T-cell (primary cell): ENCODE measurements at regions of chr12 and their contacts with region 1.

Region 1: GRCh38 chr12:56476972-56477432 is 8.6 kb downstream of the SPRYD4 start:
- DNase-seq: no peak
- ATAC-seq: no peak
- H3K4me3 ChIP-seq: no peak overlapping the region
- H3K4me3 Mint-ChIP-seq: no peak overlapping the region
- H3K27ac ChIP-seq: no peak overlapping the region
- H3K27ac Mint-ChIP-seq: no peak overlapping the region
- H3K4me1 ChIP-seq: no peaks in the 10 kb centered on the region
- H3K4me1 Mint-ChIP-seq: peaks cover 2 to 6% (median 3%) of the 10 kb centered on the region in 3 donors
- H3K27me3 ChIP-seq: no peaks in the 10 kb centered on the region
- H3K27me3 Mint-ChIP-seq: no peaks in the 10 kb centered on the region

Region 2: DNA sequence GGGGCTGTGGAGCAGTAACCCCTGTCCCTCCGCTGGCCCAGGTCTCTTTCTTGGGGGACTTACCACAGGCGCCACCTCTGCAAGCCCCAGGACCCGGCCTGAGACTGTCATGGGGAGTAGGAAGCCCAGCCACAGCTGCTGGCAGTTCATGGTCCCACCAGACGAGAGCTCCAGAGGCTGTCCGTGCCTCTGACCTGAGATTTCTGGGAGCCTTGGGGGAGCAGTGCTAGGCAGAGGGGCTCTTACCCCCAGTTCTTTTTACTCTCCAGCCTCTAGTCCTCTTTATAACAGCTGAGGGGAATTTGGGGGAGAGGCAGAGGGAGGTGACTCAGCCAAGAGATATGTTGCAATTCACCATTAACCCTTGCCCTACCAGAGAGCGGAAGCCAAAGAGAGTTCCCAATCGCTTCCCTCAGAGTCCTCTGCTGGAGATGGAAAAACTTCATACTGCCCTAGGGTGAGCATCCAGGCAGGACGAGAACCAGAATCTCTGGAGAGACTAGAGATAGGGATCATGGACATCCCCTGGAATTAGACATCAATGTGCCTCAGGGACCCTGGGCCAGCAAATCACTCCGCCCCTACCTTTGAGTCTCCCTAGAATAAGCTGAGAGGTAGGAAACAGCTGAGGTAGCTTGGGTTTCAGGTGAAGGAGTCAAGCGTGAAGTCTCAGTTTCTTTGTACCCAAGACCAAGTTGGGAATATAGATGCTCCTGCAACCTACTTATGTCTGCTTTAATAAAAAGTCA is 634.1 kb before region 1 on chr12 and contains the start of gene MMP19:
- CTCF ChIA-PET with region 1: no interaction called
- POLR2A ChIA-PET with region 1: no interaction called
- DNase-seq: no peak
- ATAC-seq: no peak
- H3K4me3 ChIP-seq: no peak within 1 kb of the TSS
- H3K4me3 Mint-ChIP-seq: no peak within 1 kb of the TSS
- H3K27ac ChIP-seq: no peak within 1 kb of the TSS
- H3K27ac Mint-ChIP-seq: no peak within 1 kb of the TSS
- H3K4me1 ChIP-seq: no peaks in the 10 kb centered on the region
- H3K4me1 Mint-ChIP-seq: peaks cover 0 to 5% (median 4%) of the 10 kb centered on the region in 3 donors
- H3K27me3 ChIP-seq: peaks cover 0 to 3% of the 10 kb centered on the region in 2 experiments
- H3K27me3 Mint-ChIP-seq: no peaks in the 10 kb centered on the region
- total RNA-seq, gene MMP19: not detected

Region 3: DNA sequence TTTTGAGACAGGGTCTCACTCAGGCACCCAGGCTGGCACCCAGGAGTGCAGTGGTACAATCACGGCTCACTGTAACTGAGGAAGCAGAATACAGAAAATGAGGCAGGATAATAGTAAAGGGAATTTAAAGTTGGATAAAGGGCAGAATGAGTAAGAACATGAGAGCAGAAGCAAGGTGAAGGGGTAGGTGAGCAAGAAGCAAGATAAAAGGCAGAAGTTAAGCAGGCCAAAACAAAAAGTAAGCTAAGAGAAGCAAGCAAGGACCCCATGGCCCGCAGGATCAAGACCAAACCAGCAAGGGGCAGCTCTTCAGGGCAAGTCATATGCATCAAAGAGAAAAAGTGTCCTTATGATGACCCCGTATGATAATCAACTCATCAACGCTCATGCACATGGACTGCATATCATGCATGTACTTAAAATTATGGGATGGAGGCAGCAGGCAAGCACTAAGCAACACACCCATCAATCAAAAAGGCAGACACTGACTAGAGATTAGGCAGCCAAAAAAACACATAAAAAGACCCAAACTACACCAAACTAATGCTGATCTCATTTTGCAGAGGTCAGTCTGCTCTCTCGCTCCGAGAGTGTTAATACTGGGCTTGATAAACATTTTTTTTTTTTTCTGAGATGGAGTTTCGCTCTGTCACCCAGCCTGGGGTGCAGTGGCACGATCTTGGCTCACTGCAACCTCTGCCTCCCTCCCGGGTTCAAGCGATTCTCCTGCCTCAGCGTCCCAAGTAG is 39.4 kb before region 1 on chr12:
- CTCF ChIA-PET with region 1: no interaction called
- POLR2A ChIA-PET with region 1: interaction called in 1 of 2 experiments, 14 read pairs
- DNase-seq: no peak
- ATAC-seq: no peak
- H3K4me3 ChIP-seq: no peak overlapping the region
- H3K4me3 Mint-ChIP-seq: no peak overlapping the region
- H3K27ac ChIP-seq: no peak overlapping the region
- H3K27ac Mint-ChIP-seq: no peak overlapping the region
- H3K4me1 ChIP-seq: no peaks in the 10 kb centered on the region
- H3K4me1 Mint-ChIP-seq: peaks cover 0 to 6% (median 0%) of the 10 kb centered on the region in 3 donors
- H3K27me3 ChIP-seq: no peaks in the 10 kb centered on the region
- H3K27me3 Mint-ChIP-seq: no peaks in the 10 kb centered on the region